ENCODE measurements at regions of chrX and their contacts with region 1.

Region 1: GRCh38 chrX:153554519-153555167 is 37.2 kb downstream of the ATP2B3 start:
- DNase-seq: peak; percentile 75
- H3K4me3 Mint-ChIP-seq: no peak overlapping the region
- H3K27ac Mint-ChIP-seq: no peak overlapping the region
- H3K4me1 Mint-ChIP-seq: no peaks in the 10 kb centered on the region
- H3K27me3 Mint-ChIP-seq: no peaks in the 10 kb centered on the region

Region 2: DNA sequence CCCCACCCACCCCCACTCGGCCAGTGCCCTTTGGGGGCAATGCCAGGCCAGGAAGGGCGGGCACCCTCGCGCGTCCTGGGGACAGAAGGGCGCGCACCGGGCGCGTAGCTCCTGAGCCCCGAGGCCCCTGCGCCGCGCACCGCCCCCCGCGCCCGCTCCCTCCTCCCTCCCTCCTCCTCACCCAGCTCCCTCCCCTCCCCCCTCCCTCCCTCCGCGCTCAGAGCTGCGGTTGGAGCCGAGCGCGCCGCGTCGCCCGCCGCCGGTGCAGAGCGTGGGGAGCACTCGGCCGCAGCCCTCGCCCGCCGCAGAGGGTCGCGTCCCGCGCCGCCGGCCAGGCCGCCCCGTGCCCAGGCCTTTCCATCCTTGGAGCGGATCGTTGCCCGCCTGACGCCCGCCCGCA is 37.2 kb before region 1 on chrX and contains the start of gene ATP2B3:
- CTCF ChIA-PET with region 1: no interaction called
- intact Hi-C with region 1: no loop called
- DNase-seq: no peak
- H3K4me3 Mint-ChIP-seq: no peak within 1 kb of the TSS
- H3K27ac Mint-ChIP-seq: no peak within 1 kb of the TSS
- H3K4me1 Mint-ChIP-seq: peaks cover 5% of the 10 kb centered on the region
- H3K27me3 Mint-ChIP-seq: peaks cover 15% of the 10 kb centered on the region
- total RNA-seq, gene ATP2B3: not detected

Region 3: DNA sequence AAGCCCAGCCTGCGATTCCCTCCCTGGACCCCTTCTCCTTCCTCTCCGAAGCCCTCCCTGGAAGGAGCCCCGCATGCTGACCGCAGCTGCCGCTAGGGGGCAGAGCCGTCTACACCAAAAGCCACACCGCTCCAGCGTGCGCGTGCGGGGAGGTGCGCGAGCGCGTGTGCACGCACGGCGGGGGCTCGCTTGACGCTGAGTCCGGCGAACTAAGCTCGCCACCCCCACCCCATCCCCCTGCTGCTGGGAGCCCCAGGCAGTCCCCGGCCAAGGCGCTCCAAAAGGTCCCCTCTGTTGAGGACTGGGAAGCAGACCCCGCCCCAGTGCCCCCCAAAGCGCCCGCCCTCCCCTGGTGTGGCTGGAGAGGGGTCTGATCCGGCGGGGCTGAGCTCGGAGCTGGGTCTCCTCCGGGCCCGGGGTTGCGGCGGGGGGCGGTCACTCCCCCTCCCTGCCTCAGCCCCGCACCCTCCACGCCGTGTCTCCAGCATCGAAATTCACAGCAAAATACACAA is 55.3 kb after region 1 on chrX:
- CTCF ChIA-PET with region 1: interaction called, 3 read pairs
- intact Hi-C with region 1: loop called (anchors 5 kb)
- DNase-seq: peak; percentile 78
- H3K4me3 Mint-ChIP-seq: peak overlapping the region; percentile 63
- H3K27ac Mint-ChIP-seq: no peak overlapping the region
- H3K4me1 Mint-ChIP-seq: peaks cover 6% of the 10 kb centered on the region
- H3K27me3 Mint-ChIP-seq: no peaks in the 10 kb centered on the region

Region 4: GRCh38 chrX:153649178-153649914 is 94.7 kb after region 1 on chrX:
- CTCF ChIA-PET with region 1: interaction called, 3 read pairs
- intact Hi-C with region 1: loop called (anchors 1 kb)
- DNase-seq: peak; percentile 49
- H3K4me3 Mint-ChIP-seq: no peak overlapping the region
- H3K27ac Mint-ChIP-seq: no peak overlapping the region
- H3K4me1 Mint-ChIP-seq: peaks cover 2% of the 10 kb centered on the region
- H3K27me3 Mint-ChIP-seq: peaks cover 24% of the 10 kb centered on the region

Region 5: DNA sequence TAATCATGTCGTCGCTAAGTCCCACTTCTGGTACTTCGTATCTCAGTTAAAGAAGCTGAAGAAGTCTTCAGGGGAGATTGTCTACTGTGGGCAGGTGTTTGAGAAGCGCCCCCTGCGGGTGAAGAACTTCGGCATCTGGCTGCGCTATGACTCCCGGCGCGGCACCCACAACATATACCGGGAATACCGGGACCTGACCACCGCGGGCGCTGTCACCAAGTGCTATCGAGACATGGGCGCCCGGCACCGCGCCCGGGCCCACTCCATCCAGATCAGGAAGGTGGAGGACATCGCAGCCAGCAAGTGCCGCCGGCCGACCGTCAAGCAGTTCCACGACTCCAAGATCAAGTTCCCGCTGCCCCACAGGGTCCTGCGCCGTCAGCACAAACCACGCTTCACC is 107.6 kb after region 1 on chrX:
- CTCF ChIA-PET with region 1: interaction called, 16 read pairs
- intact Hi-C with region 1: loop called (anchors 1 kb)
- DNase-seq: peak; percentile 69
- H3K4me3 Mint-ChIP-seq: peak overlapping the region; percentile 57
- H3K27ac Mint-ChIP-seq: no peak overlapping the region
- H3K4me1 Mint-ChIP-seq: no peaks in the 10 kb centered on the region
- H3K27me3 Mint-ChIP-seq: peaks cover 9% of the 10 kb centered on the region

Region 6: GRCh38 chrX:153667956-153668396 is 113.3 kb after region 1 on chrX:
- CTCF ChIA-PET with region 1: interaction called, 16 read pairs
- intact Hi-C with region 1: loop called (anchors 1 kb)
- DNase-seq: peak; percentile 86
- H3K4me3 Mint-ChIP-seq: peak overlapping the region; percentile 70
- H3K27ac Mint-ChIP-seq: no peak overlapping the region
- H3K4me1 Mint-ChIP-seq: peaks cover 8% of the 10 kb centered on the region
- H3K27me3 Mint-ChIP-seq: peaks cover 8% of the 10 kb centered on the region

Measured in activated naive CD4-positive, alpha-beta T cell treated with anti-CD3 and anti-CD28 coated beads for 36 hours (primary cell).